Activated B cell treated with CpG ODN at 0.5 μM for 24 hours (primary cell): ENCODE measurements at regions of chr10 and their contacts with region 1.

Region 1: GRCh38 chr10:92208736-92209327 is 82.0 kb downstream of the CPEB3 start:
- DNase-seq: no peak
- ATAC-seq: no peak
- H3K4me3 Mint-ChIP-seq: no peak overlapping the region
- H3K27ac Mint-ChIP-seq: no peak overlapping the region
- H3K4me1 Mint-ChIP-seq: peaks cover 15% of the 10 kb centered on the region
- H3K27me3 Mint-ChIP-seq: no peaks in the 10 kb centered on the region
- CTCF ChIP-seq: no peak

Region 2: DNA sequence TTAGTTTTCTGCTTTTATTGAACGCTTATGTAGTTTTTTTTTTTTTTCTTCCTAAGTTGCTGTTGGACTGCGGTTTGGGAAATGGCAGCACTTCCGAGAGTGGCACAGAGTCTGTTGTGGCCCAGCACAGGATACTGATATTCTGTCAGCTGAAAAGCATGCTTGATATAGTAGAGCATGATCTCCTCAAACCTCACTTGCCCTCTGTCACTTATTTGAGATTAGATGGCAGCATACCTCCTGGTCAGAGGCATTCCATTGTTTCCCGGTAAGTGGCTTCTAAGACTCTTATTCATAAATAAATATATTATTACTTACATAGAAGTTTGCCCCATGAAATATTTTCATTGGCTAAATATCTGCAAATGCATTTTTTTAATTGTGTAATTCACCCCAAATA is 184.1 kb before region 1 on chr10:
- CTCF ChIA-PET with region 1: no interaction called
- POLR2A ChIA-PET with region 1: no interaction called
- intact Hi-C with region 1: no loop called
- DNase-seq: no peak
- ATAC-seq: no peak
- H3K4me3 Mint-ChIP-seq: no peak overlapping the region
- H3K27ac Mint-ChIP-seq: no peak overlapping the region
- H3K4me1 Mint-ChIP-seq: no peaks in the 10 kb centered on the region
- H3K27me3 Mint-ChIP-seq: no peaks in the 10 kb centered on the region
- CTCF ChIP-seq: no peak

Region 3: DNA sequence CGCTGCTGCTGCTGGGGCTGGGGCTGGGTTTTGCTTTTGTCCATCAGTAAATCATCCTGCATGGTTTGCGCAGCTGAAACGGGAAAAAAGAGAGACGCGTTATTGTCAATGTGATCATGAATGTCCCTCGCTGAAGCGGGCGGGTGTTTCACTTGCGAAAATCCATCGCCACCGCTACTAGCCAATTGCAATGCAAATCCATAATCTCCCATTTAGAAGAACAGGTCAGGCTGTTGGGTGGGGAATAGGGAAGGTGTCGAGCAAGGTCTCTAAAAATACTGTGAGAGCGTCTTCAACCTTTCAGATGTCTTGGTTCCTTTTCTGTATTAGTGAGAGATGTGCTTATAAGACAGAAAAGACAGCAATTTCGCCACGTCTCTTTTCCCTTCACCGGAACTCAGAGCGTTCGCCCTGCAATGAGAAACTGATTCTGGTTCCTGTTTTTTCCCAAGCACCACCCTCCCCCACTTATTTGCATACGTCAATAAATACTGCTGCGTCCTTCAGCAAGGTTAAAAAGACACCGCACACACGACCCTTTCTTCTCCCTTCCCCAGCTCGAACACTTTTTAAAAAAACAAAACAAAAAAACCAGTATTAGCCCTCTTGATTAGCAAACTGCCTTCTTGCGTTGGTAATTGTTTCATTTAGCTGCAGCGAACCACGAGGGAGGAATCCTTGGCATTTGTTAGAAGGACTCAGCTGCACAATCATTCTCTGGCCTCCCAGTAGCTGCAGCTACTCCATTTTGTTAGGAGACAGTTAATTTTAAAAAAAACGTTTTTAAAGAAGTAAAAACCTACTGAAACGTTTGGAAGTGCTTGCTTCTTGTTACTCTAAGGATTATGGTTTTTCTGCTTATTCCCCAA is 31.7 kb after region 1 on chr10:
- CTCF ChIA-PET with region 1: no interaction called
- POLR2A ChIA-PET with region 1: interaction called, 3 read pairs
- intact Hi-C with region 1: loop called (anchors 1 kb)
- DNase-seq: peak; percentile 32
- ATAC-seq: peak; percentile 66
- H3K4me3 Mint-ChIP-seq: peak overlapping the region; percentile 96
- H3K27ac Mint-ChIP-seq: peak overlapping the region; percentile 85
- H3K4me1 Mint-ChIP-seq: peaks cover 39% of the 10 kb centered on the region
- H3K27me3 Mint-ChIP-seq: no peaks in the 10 kb centered on the region
- CTCF ChIP-seq: no peak